ENCODE measurements at regions of chr14 and their contacts with region 1.

Region 1: GRCh38 chr14:21408147-21408546 is 24.3 kb upstream of the SUPT16H start:
- DNase-seq: peak; percentile 65
- ATAC-seq: peak; percentile 54
- H3K4me3 ChIP-seq: no peak overlapping the region
- H3K27ac ChIP-seq: no peak overlapping the region
- H3K4me1 ChIP-seq: no peaks in the 10 kb centered on the region
- H3K27me3 ChIP-seq: no peaks in the 10 kb centered on the region
- CTCF ChIP-seq: no peak
- POLR2A ChIP-seq: no peak
- RAD21 ChIP-seq: no peak

Region 2: GRCh38 chr14:20350860-20351259 is 1057.3 kb before region 1 on chr14:
- CTCF ChIA-PET with region 1: no interaction called
- POLR2A ChIA-PET with region 1: no interaction called
- dilution Hi-C with region 1: no loop called
- in situ Hi-C with region 1: loop called (anchors 25 kb)
- intact Hi-C with region 1: no loop called
- DNase-seq: peak; percentile 17
- ATAC-seq: no peak
- H3K4me3 ChIP-seq: no peak overlapping the region
- H3K27ac ChIP-seq: no peak overlapping the region
- H3K4me1 ChIP-seq: no peaks in the 10 kb centered on the region
- H3K27me3 ChIP-seq: no peaks in the 10 kb centered on the region
- CTCF ChIP-seq: 0 out of 2 replicates have a peak, but pooled peaks have one; percentile 22
- POLR2A ChIP-seq: no peak
- RAD21 ChIP-seq: 0 out of 2 replicates have a peak, but pooled peaks have one; percentile 12

Region 3: GRCh38 chr14:21367582-21368144 is 40.5 kb before region 1 on chr14:
- CTCF ChIA-PET with region 1: no interaction called
- POLR2A ChIA-PET with region 1: no interaction called
- dilution Hi-C with region 1: no loop called
- in situ Hi-C with region 1: no loop called
- intact Hi-C with region 1: loop called (anchors 5 kb)
- DNase-seq: peak; percentile 70
- ATAC-seq: peak; percentile 76
- H3K4me3 ChIP-seq: no peak overlapping the region
- H3K27ac ChIP-seq: no peak overlapping the region
- H3K4me1 ChIP-seq: no peaks in the 10 kb centered on the region
- H3K27me3 ChIP-seq: no peaks in the 10 kb centered on the region
- CTCF ChIP-seq: no peak
- POLR2A ChIP-seq: no peak
- RAD21 ChIP-seq: no peak

Region 4: DNA sequence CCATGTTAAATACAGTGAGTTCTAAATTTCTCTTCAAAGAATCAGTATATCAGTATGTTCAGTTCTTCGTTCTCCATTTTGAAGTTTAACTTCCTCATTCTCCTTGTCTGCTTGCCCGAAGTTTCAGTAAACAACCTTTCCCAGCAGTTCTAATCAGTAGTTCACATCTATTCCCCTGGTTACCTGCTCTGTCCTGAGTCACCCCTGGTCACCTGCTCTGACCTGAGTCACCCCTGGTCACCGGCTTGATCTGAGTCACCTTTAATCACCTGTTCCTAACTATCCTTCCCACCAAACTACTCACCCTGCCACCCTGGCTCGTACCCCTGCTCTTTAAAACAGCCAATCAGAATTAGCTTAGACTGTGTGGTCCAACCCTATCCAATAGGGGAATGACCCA is 181.2 kb after region 1 on chr14:
- CTCF ChIA-PET with region 1: no interaction called
- POLR2A ChIA-PET with region 1: no interaction called
- dilution Hi-C with region 1: no loop called
- in situ Hi-C with region 1: no loop called
- intact Hi-C with region 1: no loop called
- DNase-seq: no peak
- ATAC-seq: no peak
- H3K4me3 ChIP-seq: no peak overlapping the region
- H3K27ac ChIP-seq: no peak overlapping the region
- H3K4me1 ChIP-seq: no peaks in the 10 kb centered on the region
- H3K27me3 ChIP-seq: no peaks in the 10 kb centered on the region
- CTCF ChIP-seq: no peak
- POLR2A ChIP-seq: no peak
- RAD21 ChIP-seq: no peak

Measured in IMR-90 (cell line).